Endothelial cell of umbilical vein (primary cell): ENCODE measurements at regions of chr3 and their contacts with region 1.

Region 1: DNA sequence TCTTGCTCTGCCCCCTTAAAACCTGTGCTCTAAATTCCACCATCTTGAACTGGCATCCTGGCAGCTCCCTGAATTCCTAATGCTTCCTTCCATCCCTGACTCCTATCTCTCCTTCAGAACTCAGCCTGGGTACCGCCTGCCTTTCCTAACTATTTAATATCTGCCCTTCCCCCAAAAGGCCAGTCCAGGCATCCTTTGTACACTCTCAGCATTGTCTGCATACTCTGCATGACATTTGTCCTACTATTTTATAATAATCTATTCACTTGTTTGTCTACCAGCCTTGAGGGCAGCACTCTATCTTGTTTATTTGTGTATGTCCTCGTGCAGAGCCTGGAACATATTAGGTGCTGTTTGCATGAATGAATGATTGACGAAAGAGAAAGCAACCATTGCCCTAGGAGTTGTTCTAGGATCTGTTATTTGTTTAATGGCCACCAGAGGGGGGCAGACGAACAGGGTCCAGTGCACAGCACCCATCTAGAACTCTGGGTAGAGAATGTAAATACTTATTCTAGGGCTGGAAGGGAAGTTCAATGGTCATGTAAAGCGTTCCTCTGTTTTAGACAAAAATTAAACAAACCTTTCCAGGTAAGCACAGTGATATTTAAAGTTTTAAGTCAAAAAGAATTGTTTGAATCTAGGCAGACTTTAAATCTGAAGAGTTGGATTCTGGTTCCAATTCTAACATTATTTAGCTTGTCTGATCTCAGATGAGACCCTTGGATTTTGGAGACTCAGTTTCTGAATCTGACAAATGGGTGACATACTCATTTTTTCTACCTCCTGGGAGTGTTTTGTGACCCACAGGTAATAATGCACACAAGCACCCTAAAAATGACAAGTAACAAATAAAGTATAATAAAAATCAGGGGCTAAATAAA is 125.8 kb upstream of the GALNT15 start:
- DNase-seq: peak; percentile 75
- H3K4me3 ChIP-seq: peak overlapping the region in 1 of 3 experiments; percentile 35
- H3K27ac ChIP-seq: no peak overlapping the region
- H3K4me1 ChIP-seq: peaks cover 18% of the 10 kb centered on the region
- H3K27me3 ChIP-seq: no peaks in the 10 kb centered on the region
- CTCF ChIP-seq: peak; percentile 60 to 67
- POLR2A ChIP-seq: no peak

Region 2: DNA sequence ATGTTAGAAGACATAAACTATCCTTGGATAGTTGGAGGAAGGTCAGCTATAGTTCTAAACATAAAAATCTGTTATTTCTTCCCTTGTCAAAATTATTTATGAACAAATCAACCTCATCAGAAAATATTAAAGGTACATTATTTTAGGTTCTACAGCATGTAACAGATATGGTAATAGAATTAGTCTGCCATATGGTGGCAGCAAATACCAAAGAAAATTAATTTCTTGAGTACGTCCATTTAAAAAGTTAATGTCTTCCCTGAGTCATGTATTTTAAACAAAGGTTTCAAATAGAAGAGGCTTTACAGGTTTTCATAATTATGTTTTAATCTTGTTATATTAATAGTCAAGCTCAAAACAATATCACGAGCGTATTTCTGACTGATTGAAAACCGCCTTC is 233.0 kb before region 1 on chr3:
- CTCF ChIA-PET with region 1: interaction called, 3 read pairs
- POLR2A ChIA-PET with region 1: no interaction called
- dilution Hi-C with region 1: no loop called
- intact Hi-C with region 1: loop called (anchors 1 kb)
- DNase-seq: peak; percentile 61
- H3K4me3 ChIP-seq: no peak overlapping the region
- H3K27ac ChIP-seq: no peak overlapping the region
- H3K4me1 ChIP-seq: no peaks in the 10 kb centered on the region
- H3K27me3 ChIP-seq: no peaks in the 10 kb centered on the region
- CTCF ChIP-seq: peak; percentile 5 to 21
- POLR2A ChIP-seq: no peak

Region 3: GRCh38 chr3:15997274-15997943 is 51.3 kb before region 1 on chr3:
- CTCF ChIA-PET with region 1: no interaction called
- POLR2A ChIA-PET with region 1: no interaction called
- dilution Hi-C with region 1: no loop called
- intact Hi-C with region 1: no loop called
- DNase-seq: no peak
- H3K4me3 ChIP-seq: no peak overlapping the region
- H3K27ac ChIP-seq: no peak overlapping the region
- H3K4me1 ChIP-seq: no peaks in the 10 kb centered on the region
- H3K27me3 ChIP-seq: peaks cover 3 to 8% of the 10 kb centered on the region in 2 experiments
- CTCF ChIP-seq: no peak
- POLR2A ChIP-seq: no peak

Region 4: DNA sequence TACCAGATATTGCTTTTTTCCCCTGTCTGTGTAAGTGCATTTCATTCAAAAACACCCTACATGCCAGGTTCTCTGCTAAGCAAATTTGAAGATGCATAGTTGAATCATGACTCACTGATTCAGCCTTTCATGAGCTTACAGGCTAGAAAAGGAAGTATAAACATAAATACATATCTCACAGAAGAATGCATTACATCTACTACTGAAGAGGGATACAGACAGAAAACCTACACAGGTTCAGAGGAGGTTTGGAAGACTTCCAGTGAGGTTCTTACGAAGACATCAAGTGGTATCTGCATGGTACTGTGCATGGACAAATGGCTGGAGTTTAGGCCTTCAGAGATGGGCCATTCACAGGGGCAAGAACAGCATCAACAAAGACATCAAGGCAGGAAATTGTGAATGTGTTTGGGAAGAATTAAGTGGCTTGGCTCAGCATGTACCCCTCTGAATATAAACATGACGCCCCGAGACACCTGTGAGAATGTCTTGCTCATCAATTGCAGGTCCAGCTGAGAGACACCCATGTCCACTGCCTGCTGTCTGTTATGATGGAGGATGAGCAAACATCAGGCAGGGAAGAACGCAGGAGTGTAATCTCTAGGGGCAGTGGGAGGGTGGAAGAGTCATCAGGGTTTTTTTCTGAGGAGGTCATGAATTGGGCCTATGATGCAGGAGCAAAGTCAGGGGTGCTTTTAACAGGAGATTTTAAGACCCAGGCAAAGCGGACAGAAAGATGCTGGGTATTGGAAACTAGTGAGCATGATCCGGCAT is 20.7 kb after region 1 on chr3:
- CTCF ChIA-PET with region 1: interaction called, 11 read pairs
- POLR2A ChIA-PET with region 1: no interaction called
- dilution Hi-C with region 1: no loop called
- intact Hi-C with region 1: loop called (anchors 1 kb)
- DNase-seq: peak; percentile 72
- H3K4me3 ChIP-seq: no peak overlapping the region
- H3K27ac ChIP-seq: peak overlapping the region; percentile 80
- H3K4me1 ChIP-seq: peaks cover 66% of the 10 kb centered on the region
- H3K27me3 ChIP-seq: no peaks in the 10 kb centered on the region
- CTCF ChIP-seq: no peak
- POLR2A ChIP-seq: no peak

Region 5: GRCh38 chr3:16140116-16140893 is 91.6 kb after region 1 on chr3:
- CTCF ChIA-PET with region 1: interaction called, 13 read pairs
- POLR2A ChIA-PET with region 1: interaction called, 3 read pairs
- dilution Hi-C with region 1: no loop called
- intact Hi-C with region 1: loop called (anchors 2 kb)
- DNase-seq: peak; percentile 91
- H3K4me3 ChIP-seq: no peak overlapping the region
- H3K27ac ChIP-seq: peak overlapping the region; percentile 83
- H3K4me1 ChIP-seq: peaks cover 16% of the 10 kb centered on the region
- H3K27me3 ChIP-seq: no peaks in the 10 kb centered on the region
- CTCF ChIP-seq: no peak
- POLR2A ChIP-seq: peak; percentile 19

Region 6: DNA sequence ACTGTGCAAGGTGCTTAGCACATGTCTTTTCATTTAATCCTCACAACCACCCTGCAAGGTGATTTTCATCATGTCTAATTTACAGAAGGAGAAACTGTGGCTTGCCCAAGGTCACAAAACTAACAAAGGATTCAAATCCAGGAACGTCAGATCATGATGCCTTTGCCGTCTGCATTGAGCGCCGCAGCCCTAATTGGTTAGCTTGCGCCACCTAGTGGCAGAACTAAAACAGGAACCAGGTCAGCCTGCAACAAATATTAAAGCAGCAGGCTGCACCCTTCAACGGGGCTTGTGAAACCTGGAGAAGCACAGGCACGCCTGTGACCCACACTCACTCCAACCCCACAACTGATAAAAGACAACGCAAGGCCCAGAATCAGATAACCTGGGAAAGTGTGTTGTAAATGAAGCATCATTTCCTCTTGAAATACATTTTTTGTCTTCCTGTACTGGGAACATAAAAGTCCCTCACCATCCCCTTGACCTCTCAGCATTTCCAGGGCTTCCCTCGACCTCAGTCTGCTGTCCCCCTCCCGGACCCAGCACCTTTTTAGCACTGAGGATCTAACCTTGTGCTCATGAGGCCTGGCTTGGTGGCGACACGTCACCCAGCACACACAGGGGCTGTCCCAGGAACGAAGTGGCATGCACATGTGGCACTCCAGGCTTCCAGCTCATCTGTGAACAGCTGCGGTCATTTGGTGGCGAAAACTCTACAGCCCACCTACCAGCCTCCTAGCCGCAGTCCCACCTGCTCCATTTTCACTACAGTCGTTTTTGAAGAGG is 198.8 kb after region 1 on chr3:
- CTCF ChIA-PET with region 1: interaction called, 30 read pairs
- POLR2A ChIA-PET with region 1: no interaction called
- dilution Hi-C with region 1: no loop called
- intact Hi-C with region 1: loop called (anchors 1 kb)
- DNase-seq: peak; percentile 72
- H3K4me3 ChIP-seq: no peak overlapping the region
- H3K27ac ChIP-seq: no peak overlapping the region
- H3K4me1 ChIP-seq: peaks cover 11% of the 10 kb centered on the region
- H3K27me3 ChIP-seq: no peaks in the 10 kb centered on the region
- CTCF ChIP-seq: peak; percentile 86 to 87
- POLR2A ChIP-seq: no peak